HCT116 (cell line): ENCODE measurements at regions of chr2 and their contacts with region 1.

Region 1: GRCh38 chr2:38581193-38582147 is 21.3 kb downstream of the HNRNPLL start:
- DNase-seq: peak; percentile 52
- ATAC-seq: peak; percentile 84
- H3K4me3 ChIP-seq: no peak overlapping the region
- H3K27ac ChIP-seq: no peak overlapping the region
- H3K4me1 ChIP-seq: peaks cover 6% of the 10 kb centered on the region in 2 experiments; a peak in 3 of 4 replicates
- H3K27me3 ChIP-seq: no peaks in the 10 kb centered on the region
- CTCF ChIP-seq: peak; percentile 61 to 78 (median 65); a peak in 5 of 6 replicates
- POLR2A ChIP-seq: no peak
- RAD21 ChIP-seq: peak; percentile 78

Region 2: DNA sequence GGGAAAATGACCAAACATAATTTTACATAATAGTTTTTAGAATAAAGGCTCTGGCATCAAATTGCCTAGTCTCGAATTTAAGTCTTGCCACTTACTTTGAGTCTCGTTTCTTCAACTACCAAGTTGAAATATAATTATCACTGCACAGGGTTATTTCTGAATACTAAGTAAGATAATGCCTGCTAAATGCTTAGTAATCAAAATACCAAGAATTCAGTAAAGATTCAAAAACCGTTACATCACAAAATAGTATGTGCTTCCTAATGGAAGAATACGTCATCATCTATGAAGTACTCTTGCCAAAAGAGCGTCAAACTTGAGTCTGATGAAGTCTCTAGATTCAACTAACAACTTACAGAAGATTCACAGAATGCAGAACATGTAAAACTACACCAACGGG is 244.9 kb before region 1 on chr2:
- CTCF ChIA-PET with region 1: no interaction called
- POLR2A ChIA-PET with region 1: no interaction called
- RAD21 ChIA-PET with region 1: no interaction called
- intact Hi-C with region 1: no loop called
- DNase-seq: no peak
- ATAC-seq: no peak
- H3K4me3 ChIP-seq: no peak overlapping the region
- H3K27ac ChIP-seq: no peak overlapping the region
- H3K4me1 ChIP-seq: no peaks in the 10 kb centered on the region
- H3K27me3 ChIP-seq: no peaks in the 10 kb centered on the region
- CTCF ChIP-seq: no peak
- POLR2A ChIP-seq: no peak
- RAD21 ChIP-seq: no peak

Region 3: DNA sequence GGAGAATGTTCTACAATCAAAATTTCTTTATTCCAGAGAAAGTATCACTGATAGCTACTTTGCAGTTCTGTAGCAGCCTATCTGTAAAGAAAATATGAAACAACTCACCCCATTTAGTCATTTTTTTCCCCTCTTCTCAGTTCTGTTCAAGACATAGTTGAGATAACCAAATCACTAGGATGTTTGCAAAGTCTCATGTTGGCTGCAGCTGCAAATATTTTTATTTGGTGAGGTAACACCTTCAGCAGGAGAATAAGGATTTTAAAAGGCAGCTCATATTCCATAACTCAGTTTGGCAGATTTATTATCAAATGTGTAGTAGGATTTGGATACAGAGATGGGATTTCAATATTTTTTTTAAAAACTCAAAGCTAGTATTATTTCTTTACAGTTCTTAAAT is 19.8 kb before region 1 on chr2:
- CTCF ChIA-PET with region 1: interaction called, 20 read pairs
- POLR2A ChIA-PET with region 1: no interaction called
- RAD21 ChIA-PET with region 1: no interaction called
- intact Hi-C with region 1: no loop called
- DNase-seq: no peak
- ATAC-seq: no peak
- H3K4me3 ChIP-seq: no peak overlapping the region
- H3K27ac ChIP-seq: no peak overlapping the region
- H3K4me1 ChIP-seq: no peaks in the 10 kb centered on the region
- H3K27me3 ChIP-seq: no peaks in the 10 kb centered on the region
- CTCF ChIP-seq: no peak
- POLR2A ChIP-seq: no peak
- RAD21 ChIP-seq: no peak

Region 4: GRCh38 chr2:38602732-38603401 is 21.4 kb after region 1 on chr2 and contains the start of gene HNRNPLL:
- CTCF ChIA-PET with region 1: interaction called, 21 read pairs
- POLR2A ChIA-PET with region 1: interaction called, 3 read pairs
- RAD21 ChIA-PET with region 1: no interaction called
- intact Hi-C with region 1: no loop called
- DNase-seq: peak; percentile 91
- ATAC-seq: peak; percentile 92
- H3K4me3 ChIP-seq: peak within 1 kb of the TSS; percentile 77 to 79
- H3K27ac ChIP-seq: peak within 1 kb of the TSS; percentile 95
- H3K4me1 ChIP-seq: peaks cover 23 to 28% of the 10 kb centered on the region in 2 experiments
- H3K27me3 ChIP-seq: no peaks in the 10 kb centered on the region
- CTCF ChIP-seq: no peak
- POLR2A ChIP-seq: peak; percentile 83
- RAD21 ChIP-seq: no peak
- total RNA-seq, gene HNRNPLL: 43.2 TPM

Region 5: DNA sequence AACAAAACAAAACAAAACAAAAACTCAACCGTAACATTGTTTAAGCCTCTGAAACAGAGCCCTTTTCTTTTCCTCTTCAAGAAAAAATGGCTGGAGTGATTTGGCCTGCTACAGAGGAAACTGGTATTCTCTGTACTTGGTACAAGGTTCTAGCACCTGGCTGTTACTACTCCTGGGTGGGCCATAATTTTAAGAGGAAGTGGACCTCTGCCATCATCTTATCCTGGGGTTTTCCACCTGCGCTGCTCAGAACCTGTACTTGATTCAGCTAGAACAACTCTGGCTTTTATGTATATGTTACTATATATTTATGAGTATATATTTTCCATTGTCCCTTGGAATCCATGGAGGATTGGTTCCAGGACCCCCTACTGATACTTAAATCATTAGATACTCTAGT is 147.2 kb after region 1 on chr2:
- CTCF ChIA-PET with region 1: interaction called, 12 read pairs
- POLR2A ChIA-PET with region 1: no interaction called
- RAD21 ChIA-PET with region 1: no interaction called
- intact Hi-C with region 1: loop called (anchors 2 kb)
- DNase-seq: no peak
- ATAC-seq: no peak
- H3K4me3 ChIP-seq: no peak overlapping the region
- H3K27ac ChIP-seq: no peak overlapping the region
- H3K4me1 ChIP-seq: 0 out of 4 replicates have a peak, but pooled peaks cover 0 to 2% of the 10 kb centered on the region in 2 experiments
- H3K27me3 ChIP-seq: no peaks in the 10 kb centered on the region
- CTCF ChIP-seq: no peak
- POLR2A ChIP-seq: no peak
- RAD21 ChIP-seq: no peak

Region 6: GRCh38 chr2:38750891-38751595 is 169.6 kb after region 1 on chr2 and contains the start of gene SRSF7:
- CTCF ChIA-PET with region 1: interaction called, 7 read pairs
- POLR2A ChIA-PET with region 1: interaction called, 17 read pairs
- RAD21 ChIA-PET with region 1: no interaction called
- intact Hi-C with region 1: no loop called
- DNase-seq: peak; percentile 99
- ATAC-seq: peak; percentile 87
- H3K4me3 ChIP-seq: peak within 1 kb of the TSS; percentile 76 to 100
- H3K27ac ChIP-seq: peak within 1 kb of the TSS; percentile 86
- H3K4me1 ChIP-seq: peaks cover 9 to 17% of the 10 kb centered on the region in 2 experiments
- H3K27me3 ChIP-seq: no peaks in the 10 kb centered on the region
- CTCF ChIP-seq: no peak
- POLR2A ChIP-seq: peak; percentile 100
- RAD21 ChIP-seq: no peak
- total RNA-seq, gene SRSF7: 215 TPM